ENCODE measurements at regions of chr7 and their contacts with region 1.

Region 1: DNA sequence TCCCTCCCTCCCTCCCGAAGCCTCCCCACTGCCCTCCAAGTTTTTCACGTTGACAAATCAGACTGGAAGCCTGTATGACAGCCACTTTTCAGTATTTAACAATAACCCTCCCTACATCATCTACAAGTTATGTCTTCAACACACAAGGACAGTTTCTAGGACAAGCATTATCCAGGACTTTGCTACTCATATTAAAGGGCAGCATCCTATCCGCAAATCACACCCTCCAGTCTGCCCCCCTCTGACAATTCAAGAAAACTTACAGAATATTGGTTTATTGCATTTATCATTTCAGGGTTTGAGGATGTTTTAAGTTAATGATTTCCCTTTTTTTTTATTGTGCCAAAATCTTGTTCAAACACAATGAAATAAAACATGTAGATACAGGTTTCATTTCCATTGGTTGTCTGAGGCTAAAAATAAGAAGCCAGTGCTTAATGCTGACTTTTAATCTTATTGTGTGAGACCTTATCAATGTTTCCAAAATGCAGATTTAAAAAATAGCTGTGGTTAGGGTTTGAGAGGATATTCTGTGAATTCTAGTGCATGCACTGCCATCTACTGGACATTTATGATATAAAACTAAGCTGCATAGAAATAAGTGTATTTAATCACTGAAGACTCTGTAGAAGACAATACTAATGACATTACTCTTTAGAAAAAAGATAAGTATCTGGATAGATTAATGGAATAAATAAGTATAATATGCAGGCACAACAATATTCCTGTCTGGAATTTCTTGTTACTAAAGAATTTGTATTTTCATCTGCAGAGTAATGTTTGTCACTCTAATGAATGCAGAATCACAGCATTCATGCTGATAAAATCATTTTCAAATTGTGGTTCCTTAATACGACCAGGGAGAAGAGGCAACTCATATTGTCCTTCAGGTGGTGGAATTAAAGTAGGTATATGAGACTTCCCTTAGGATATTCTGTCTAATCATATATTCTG is 64.1 kb downstream of the CAV1 start:
- DNase-seq: no peak
- H3K4me3 Mint-ChIP-seq: no peak overlapping the region
- H3K27ac Mint-ChIP-seq: peak overlapping the region; percentile 54
- H3K4me1 Mint-ChIP-seq: peaks cover 25% of the 10 kb centered on the region
- H3K27me3 Mint-ChIP-seq: peaks cover 24% of the 10 kb centered on the region

Region 2: GRCh38 chr7:116150588-116150987 is 438.3 kb before region 1 on chr7:
- intact Hi-C with region 1: loop called (anchors 2 kb)
- DNase-seq: no peak
- H3K4me3 Mint-ChIP-seq: no peak overlapping the region
- H3K27ac Mint-ChIP-seq: no peak overlapping the region
- H3K4me1 Mint-ChIP-seq: peaks cover 25% of the 10 kb centered on the region
- H3K27me3 Mint-ChIP-seq: peaks cover 11% of the 10 kb centered on the region

Region 3: GRCh38 chr7:116180302-116180701 is 408.6 kb before region 1 on chr7:
- intact Hi-C with region 1: loop called (anchors 1 kb)
- DNase-seq: no peak
- H3K4me3 Mint-ChIP-seq: no peak overlapping the region
- H3K27ac Mint-ChIP-seq: no peak overlapping the region
- H3K4me1 Mint-ChIP-seq: no peaks in the 10 kb centered on the region
- H3K27me3 Mint-ChIP-seq: peaks cover 7% of the 10 kb centered on the region

Region 4: GRCh38 chr7:116339564-116339963 is 249.4 kb before region 1 on chr7:
- intact Hi-C with region 1: no loop called
- DNase-seq: no peak
- H3K4me3 Mint-ChIP-seq: no peak overlapping the region
- H3K27ac Mint-ChIP-seq: no peak overlapping the region
- H3K4me1 Mint-ChIP-seq: peaks cover 7% of the 10 kb centered on the region
- H3K27me3 Mint-ChIP-seq: peaks cover 33% of the 10 kb centered on the region

Region 5: DNA sequence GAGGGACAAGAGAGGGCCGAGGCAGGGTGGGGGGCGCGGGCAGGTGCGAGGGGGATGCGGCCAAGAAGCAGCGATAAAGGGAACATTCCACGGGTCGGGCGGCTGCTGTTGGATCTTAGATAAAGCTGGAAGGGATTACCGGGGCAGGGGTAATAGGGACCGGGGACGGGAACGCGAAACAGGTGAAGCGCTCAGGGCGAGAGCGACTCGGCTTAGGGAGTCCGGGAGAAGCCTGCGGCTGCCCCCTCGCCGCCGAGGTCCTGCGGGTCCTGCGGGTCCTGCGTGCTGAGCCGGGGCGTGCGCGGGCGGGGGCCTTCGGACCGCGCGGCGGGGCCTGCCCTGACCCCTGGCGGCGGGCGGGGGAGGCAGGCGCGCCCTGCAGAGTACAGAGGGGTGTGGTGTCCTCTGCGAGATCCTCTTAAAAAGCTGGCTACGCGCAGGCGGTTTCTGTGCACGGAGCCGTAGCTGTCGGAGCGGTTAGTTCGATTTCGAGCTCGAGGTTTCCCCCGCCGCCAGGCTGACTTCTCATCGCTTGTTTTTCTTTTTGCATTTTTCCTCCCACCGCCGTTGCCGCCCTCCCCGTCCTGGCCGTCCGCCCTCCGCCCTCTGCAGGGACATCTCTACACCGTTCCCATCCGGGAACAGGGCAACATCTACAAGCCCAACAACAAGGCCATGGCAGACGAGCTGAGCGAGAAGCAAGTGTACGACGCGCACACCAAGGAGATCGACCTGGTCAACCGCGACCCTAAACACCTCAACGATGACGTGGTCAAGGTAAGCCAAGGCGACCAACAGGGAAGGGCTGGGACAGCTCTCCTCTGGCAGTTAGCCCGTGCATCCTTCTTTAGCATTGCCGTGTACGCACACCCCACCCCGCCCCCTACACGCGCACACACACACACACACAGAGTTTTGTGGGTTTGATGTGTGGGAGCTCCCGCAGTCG is 62.7 kb before region 1 on chr7:
- intact Hi-C with region 1: loop called (anchors 1 kb)
- DNase-seq: peak; percentile 51
- H3K4me3 Mint-ChIP-seq: peak overlapping the region; percentile 79
- H3K27ac Mint-ChIP-seq: no peak overlapping the region
- H3K4me1 Mint-ChIP-seq: peaks cover 23% of the 10 kb centered on the region
- H3K27me3 Mint-ChIP-seq: peaks cover 71% of the 10 kb centered on the region

Region 6: GRCh38 chr7:116786791-116787443 is 198.0 kb after region 1 on chr7:
- intact Hi-C with region 1: loop called (anchors 5 kb)
- DNase-seq: no peak
- H3K4me3 Mint-ChIP-seq: no peak overlapping the region
- H3K27ac Mint-ChIP-seq: no peak overlapping the region
- H3K4me1 Mint-ChIP-seq: no peaks in the 10 kb centered on the region
- H3K27me3 Mint-ChIP-seq: peaks cover 2% of the 10 kb centered on the region